Heart right ventricle (tissue), 16 donors: ENCODE measurements at regions of chr10 and their contacts with region 1.

Region 1: DNA sequence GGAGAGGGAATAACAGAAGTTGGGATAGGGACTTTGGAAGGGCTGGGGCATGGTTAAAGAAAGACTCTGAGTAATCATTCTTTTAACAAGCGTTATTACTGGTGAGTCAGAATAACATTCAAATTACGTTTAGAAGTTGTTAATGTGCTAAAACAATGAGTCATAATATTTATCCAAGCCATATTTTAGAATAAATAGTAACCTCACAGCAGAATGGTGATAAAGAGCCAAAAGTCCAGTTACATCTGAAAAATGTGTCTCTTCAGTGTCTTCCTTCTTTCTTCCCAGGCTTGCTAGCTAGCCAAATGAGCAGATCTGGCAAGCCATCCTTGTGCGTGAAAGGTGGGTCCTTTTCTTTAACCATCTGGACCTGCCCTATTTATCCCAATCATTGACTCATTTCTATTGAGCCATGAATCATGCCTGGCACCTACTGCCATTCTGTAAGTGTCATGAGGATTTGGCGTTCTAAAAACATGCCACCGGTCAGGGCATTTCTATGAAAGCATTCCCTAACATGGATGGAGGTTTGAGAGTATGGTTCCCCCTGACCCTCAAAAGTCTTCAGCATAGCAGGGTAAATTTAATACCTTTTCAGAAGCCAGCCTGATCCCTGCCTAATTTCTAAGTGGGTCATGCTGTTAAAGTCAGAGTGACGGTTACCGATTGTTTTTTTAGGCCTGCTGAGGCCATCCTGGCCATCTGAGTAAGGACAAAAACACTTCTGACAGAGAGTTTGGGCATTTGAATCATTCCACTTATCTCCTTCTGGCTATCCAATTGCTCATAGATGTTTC is 26.8 kb downstream of the MYPN start:
- DNase-seq: peak in 1 of 2 donors; percentile 11
- ATAC-seq: peak; percentile 45 to 80 (median 76)
- H3K4me3 ChIP-seq: no peak overlapping the region
- H3K27ac ChIP-seq: peak overlapping the region; percentile 43 to 93 (median 79)
- H3K4me1 ChIP-seq: peaks cover 0 to 63% (median 17%) of the 10 kb centered on the region in 9 donors
- H3K27me3 ChIP-seq: no peaks in the 10 kb centered on the region
- CTCF ChIP-seq: no peak

Region 2: DNA sequence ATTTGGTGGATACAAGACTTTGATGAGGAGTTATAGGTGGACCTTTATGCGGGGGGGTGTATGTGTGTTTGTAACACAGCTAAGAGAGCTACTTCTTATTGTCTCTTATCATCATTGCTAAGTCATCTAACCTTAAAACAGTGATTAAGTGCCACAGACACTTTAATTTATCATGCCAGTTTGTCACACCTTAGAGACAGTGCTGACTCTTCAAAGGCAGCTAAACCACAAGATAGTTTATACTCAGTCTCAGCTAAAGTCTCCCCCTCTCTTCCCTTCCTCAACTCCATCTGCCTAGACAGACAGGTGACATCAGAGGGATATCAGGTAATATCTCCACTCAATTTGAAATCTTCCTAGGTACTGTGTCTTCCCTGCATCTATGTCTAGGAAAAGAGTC is 15.3 kb after region 1 on chr10:
- intact Hi-C with region 1: loop called in 1 of 10 experiments (anchors 2 kb)
- DNase-seq: no peak
- ATAC-seq: no peak
- H3K4me3 ChIP-seq: no peak overlapping the region
- H3K27ac ChIP-seq: peak overlapping the region in 6 of 10 donors; percentile 17 to 95 (median 86)
- H3K4me1 ChIP-seq: peaks cover 0 to 35% (median 18%) of the 10 kb centered on the region in 9 donors
- H3K27me3 ChIP-seq: no peaks in the 10 kb centered on the region
- CTCF ChIP-seq: no peak